ENCODE measurements at regions of chrX and their contacts with region 1.

Region 1: DNA sequence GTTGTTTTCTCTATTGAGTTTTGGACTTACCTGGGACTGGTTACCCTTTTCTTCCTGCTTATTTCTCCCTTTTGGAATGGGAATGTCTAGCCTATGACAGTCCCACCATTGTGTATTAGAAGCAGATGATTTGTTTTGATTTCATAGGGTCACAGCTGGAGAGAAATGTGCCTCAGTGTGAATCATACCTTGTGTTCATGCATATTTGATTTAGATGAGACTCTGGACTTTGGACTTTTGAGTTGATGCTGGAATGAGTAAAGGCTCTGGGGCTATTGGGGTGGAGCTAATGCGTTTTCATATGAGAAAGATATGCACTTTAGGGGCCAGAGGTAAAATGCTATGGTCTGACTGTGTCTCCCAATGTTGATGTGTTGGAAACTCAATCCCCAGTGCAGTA is 30.5 kb upstream of the TEX13C start:
- DNase-seq: no peak
- H3K4me3 Mint-ChIP-seq: no peak overlapping the region
- H3K27ac Mint-ChIP-seq: no peak overlapping the region
- H3K4me1 Mint-ChIP-seq: peaks cover 10% of the 10 kb centered on the region
- H3K27me3 Mint-ChIP-seq: no peaks in the 10 kb centered on the region

Region 2: GRCh38 chrX:126985981-126986380 is 1696.8 kb after region 1 on chrX:
- CTCF ChIA-PET with region 1: no interaction called
- intact Hi-C with region 1: loop called (anchors 10 kb)
- DNase-seq: no peak
- H3K4me3 Mint-ChIP-seq: no peak overlapping the region
- H3K27ac Mint-ChIP-seq: no peak overlapping the region
- H3K4me1 Mint-ChIP-seq: no peaks in the 10 kb centered on the region
- H3K27me3 Mint-ChIP-seq: no peaks in the 10 kb centered on the region